Activated CD4-positive, alpha-beta T cell treated with anti-CD3 and anti-CD28 coated beads for 36 hours (primary cell): ENCODE measurements at regions of chr16 and their contacts with region 1.

Region 1: GRCh38 chr16:15833541-15833940 is 23.3 kb downstream of the MYH11 start:
- DNase-seq: no peak
- ATAC-seq: no peak
- H3K4me3 Mint-ChIP-seq: no peak overlapping the region
- H3K27ac Mint-ChIP-seq: no peak overlapping the region
- H3K4me1 Mint-ChIP-seq: peaks cover 5% of the 10 kb centered on the region
- H3K27me3 Mint-ChIP-seq: no peaks in the 10 kb centered on the region

Region 2: GRCh38 chr16:15949210-15950160 is 115.9 kb after region 1 on chr16 and contains the start of gene ABCC1:
- CTCF ChIA-PET with region 1: no interaction called
- POLR2A ChIA-PET with region 1: no interaction called
- intact Hi-C with region 1: no loop called
- DNase-seq: peak; percentile 73
- ATAC-seq: peak; percentile 69
- H3K4me3 Mint-ChIP-seq: peak within 1 kb of the TSS; percentile 95
- H3K27ac Mint-ChIP-seq: peak within 1 kb of the TSS; percentile 100
- H3K4me1 Mint-ChIP-seq: peaks cover 51% of the 10 kb centered on the region
- H3K27me3 Mint-ChIP-seq: no peaks in the 10 kb centered on the region
- total RNA-seq, gene ABCC1: 57.8 to 65.1 TPM

Region 3: DNA sequence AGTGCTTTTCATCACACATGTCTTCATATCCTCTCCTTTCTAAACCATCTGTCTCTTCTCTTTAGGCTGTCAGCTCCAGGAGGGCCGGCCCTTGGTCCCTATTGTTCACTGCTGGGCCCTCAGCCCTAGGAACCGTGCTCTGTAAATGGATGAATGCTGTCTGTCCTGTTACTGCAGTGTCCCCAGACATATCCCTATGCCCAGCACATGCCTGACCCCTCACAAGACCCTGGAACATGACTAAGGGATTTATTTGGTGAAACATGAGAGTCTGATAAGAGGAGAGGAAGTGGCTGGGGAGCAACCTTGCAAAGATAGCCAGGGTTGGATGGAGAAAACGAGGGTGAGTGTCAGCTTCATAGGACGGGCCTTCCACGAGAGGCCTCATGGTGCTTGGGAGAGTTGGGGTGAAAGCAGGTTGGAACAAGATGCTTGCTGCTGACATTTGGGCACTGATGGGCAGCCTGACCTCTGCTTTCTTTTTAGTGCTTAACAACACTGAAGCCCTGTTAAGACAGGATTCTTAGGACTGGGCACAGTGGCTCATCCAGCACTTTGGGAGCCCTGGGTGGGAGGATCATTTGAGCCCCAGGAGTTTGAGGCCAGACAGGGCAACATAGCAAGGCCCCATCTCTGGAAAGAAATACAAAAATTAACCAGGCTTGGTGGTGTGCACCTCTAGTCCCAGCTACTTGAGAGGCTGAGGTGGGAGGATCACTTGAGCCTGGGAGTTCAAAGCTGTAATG is 154.9 kb after region 1 on chr16:
- CTCF ChIA-PET with region 1: no interaction called
- POLR2A ChIA-PET with region 1: interaction called, 10 read pairs
- intact Hi-C with region 1: no loop called
- DNase-seq: no peak
- ATAC-seq: no peak
- H3K4me3 Mint-ChIP-seq: no peak overlapping the region
- H3K27ac Mint-ChIP-seq: peak overlapping the region; percentile 8
- H3K4me1 Mint-ChIP-seq: peaks cover 35% of the 10 kb centered on the region
- H3K27me3 Mint-ChIP-seq: no peaks in the 10 kb centered on the region

Region 4: GRCh38 chr16:16881814-16882213 is 1048.3 kb after region 1 on chr16:
- CTCF ChIA-PET with region 1: no interaction called
- POLR2A ChIA-PET with region 1: no interaction called
- intact Hi-C with region 1: no loop called
- DNase-seq: no peak
- ATAC-seq: no peak
- H3K4me3 Mint-ChIP-seq: no peak overlapping the region
- H3K27ac Mint-ChIP-seq: no peak overlapping the region
- H3K4me1 Mint-ChIP-seq: no peaks in the 10 kb centered on the region
- H3K27me3 Mint-ChIP-seq: peaks cover 8% of the 10 kb centered on the region